Esophagus squamous epithelium (tissue), 5 donors: ENCODE measurements at regions of chr17 and their contacts with region 1.

Region 1: DNA sequence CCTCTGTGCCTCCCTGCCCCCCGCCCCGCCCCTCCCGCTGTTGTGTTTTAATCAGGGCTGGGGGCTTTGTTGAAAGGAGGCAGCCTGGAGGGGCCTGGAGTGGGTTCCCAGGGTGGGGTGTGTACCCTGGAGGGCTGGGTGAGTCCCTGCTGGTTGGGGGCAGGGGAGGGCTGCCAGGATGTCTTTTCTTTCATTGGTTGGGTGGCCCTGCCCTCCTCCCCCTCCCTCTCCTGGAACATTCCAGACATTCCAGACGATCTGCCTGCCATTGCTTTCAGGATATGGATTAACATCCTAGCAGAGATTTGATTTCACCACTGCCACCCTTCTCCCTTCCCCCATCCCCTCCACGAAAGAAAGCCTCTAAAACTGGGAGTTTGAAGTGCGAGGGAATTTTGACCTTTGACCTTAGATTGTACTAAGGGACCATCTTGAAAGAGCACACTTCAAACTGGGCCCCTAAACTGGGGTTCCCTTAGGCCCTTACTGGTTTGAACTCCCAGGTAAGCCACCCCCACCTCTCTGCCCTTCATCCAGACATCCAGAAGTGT is 25.3 kb downstream of the IGF2BP1 start:
- DNase-seq: no peak
- H3K4me3 ChIP-seq: no peak overlapping the region
- H3K27ac ChIP-seq: no peak overlapping the region
- H3K4me1 ChIP-seq: no peaks in the 10 kb centered on the region
- H3K27me3 ChIP-seq: peaks cover 0 to 79% (median 0%) of the 10 kb centered on the region in 4 donors
- CTCF ChIP-seq: no peak
- POLR2A ChIP-seq: no peak

Region 2: GRCh38 chr17:48804925-48805411 is 217.5 kb before region 1 on chr17:
- intact Hi-C with region 1: loop called (anchors 10 kb)
- DNase-seq: no peak
- H3K4me3 ChIP-seq: no peak overlapping the region
- H3K27ac ChIP-seq: no peak overlapping the region
- H3K4me1 ChIP-seq: peaks cover 0 to 24% (median 5%) of the 10 kb centered on the region in 3 donors
- H3K27me3 ChIP-seq: peaks cover 0 to 88% (median 1%) of the 10 kb centered on the region in 4 donors
- CTCF ChIP-seq: peak; percentile 77 to 96 (median 88)
- POLR2A ChIP-seq: no peak

Region 3: GRCh38 chr17:49190932-49191331 is 168.5 kb after region 1 on chr17:
- intact Hi-C with region 1: no loop called
- DNase-seq: no peak
- H3K4me3 ChIP-seq: no peak overlapping the region
- H3K27ac ChIP-seq: peak overlapping the region in 3 of 4 donors; percentile 9 to 96 (median 95)
- H3K4me1 ChIP-seq: peaks cover 0 to 31% (median 0%) of the 10 kb centered on the region in 3 donors
- H3K27me3 ChIP-seq: no peaks in the 10 kb centered on the region
- CTCF ChIP-seq: no peak
- POLR2A ChIP-seq: no peak